HepG2 (cell line): ENCODE measurements at regions of chr7 and their contacts with region 1.

Region 1: GRCh38 chr7:33185786-33186185 is 56.4 kb downstream of the BBS9 start:
- DNase-seq: peak; percentile 62
- ATAC-seq: peak; percentile 85
- H3K4me3 ChIP-seq: no peak overlapping the region
- H3K27ac ChIP-seq: no peak overlapping the region
- H3K4me1 ChIP-seq: peaks cover 7% of the 10 kb centered on the region
- H3K27me3 ChIP-seq: no peaks in the 10 kb centered on the region; a peak in 1 of 5 replicates
- CTCF ChIP-seq: peak; percentile 84
- EP300 ChIP-seq: no peak
- POLR2A ChIP-seq: no peak
- RAD21 ChIP-seq: peak; percentile 76

Region 2: GRCh38 chr7:33334349-33334748 is 148.6 kb after region 1 on chr7:
- CTCF ChIA-PET with region 1: no interaction called
- POLR2A ChIA-PET with region 1: no interaction called
- in situ Hi-C with region 1: no loop called
- intact Hi-C with region 1: loop called (anchors 5 kb)
- DNase-seq: peak; percentile 6
- ATAC-seq: peak; percentile 63
- H3K4me3 ChIP-seq: no peak overlapping the region
- H3K27ac ChIP-seq: no peak overlapping the region
- H3K4me1 ChIP-seq: no peaks in the 10 kb centered on the region
- H3K27me3 ChIP-seq: no peaks in the 10 kb centered on the region
- CTCF ChIP-seq: peak; percentile 71
- EP300 ChIP-seq: no peak
- POLR2A ChIP-seq: no peak
- RAD21 ChIP-seq: no peak

Region 3: GRCh38 chr7:33459340-33459751 is 273.6 kb after region 1 on chr7:
- CTCF ChIA-PET with region 1: no interaction called
- POLR2A ChIA-PET with region 1: no interaction called
- in situ Hi-C with region 1: loop called (anchors 10 kb)
- intact Hi-C with region 1: loop called (anchors 1 kb)
- DNase-seq: peak; percentile 41
- ATAC-seq: peak; percentile 99
- H3K4me3 ChIP-seq: no peak overlapping the region
- H3K27ac ChIP-seq: no peak overlapping the region
- H3K4me1 ChIP-seq: peaks cover 10% of the 10 kb centered on the region; the same call in 1 of the 2 replicates
- H3K27me3 ChIP-seq: no peaks in the 10 kb centered on the region
- CTCF ChIP-seq: peak; percentile 52
- EP300 ChIP-seq: no peak
- POLR2A ChIP-seq: no peak
- RAD21 ChIP-seq: no peak

Region 4: GRCh38 chr7:33716581-33717477 is 531.0 kb after region 1 on chr7:
- CTCF ChIA-PET with region 1: no interaction called
- POLR2A ChIA-PET with region 1: no interaction called
- in situ Hi-C with region 1: loop called (anchors 25 kb)
- intact Hi-C with region 1: no loop called
- DNase-seq: peak; percentile 33
- ATAC-seq: peak; percentile 41; the same call in 1 of the 3 replicates
- H3K4me3 ChIP-seq: no peak overlapping the region
- H3K27ac ChIP-seq: no peak overlapping the region
- H3K4me1 ChIP-seq: peaks cover 29% of the 10 kb centered on the region
- H3K27me3 ChIP-seq: no peaks in the 10 kb centered on the region
- CTCF ChIP-seq: peak; percentile 63
- EP300 ChIP-seq: no peak
- POLR2A ChIP-seq: no peak
- RAD21 ChIP-seq: no peak

Region 5: DNA sequence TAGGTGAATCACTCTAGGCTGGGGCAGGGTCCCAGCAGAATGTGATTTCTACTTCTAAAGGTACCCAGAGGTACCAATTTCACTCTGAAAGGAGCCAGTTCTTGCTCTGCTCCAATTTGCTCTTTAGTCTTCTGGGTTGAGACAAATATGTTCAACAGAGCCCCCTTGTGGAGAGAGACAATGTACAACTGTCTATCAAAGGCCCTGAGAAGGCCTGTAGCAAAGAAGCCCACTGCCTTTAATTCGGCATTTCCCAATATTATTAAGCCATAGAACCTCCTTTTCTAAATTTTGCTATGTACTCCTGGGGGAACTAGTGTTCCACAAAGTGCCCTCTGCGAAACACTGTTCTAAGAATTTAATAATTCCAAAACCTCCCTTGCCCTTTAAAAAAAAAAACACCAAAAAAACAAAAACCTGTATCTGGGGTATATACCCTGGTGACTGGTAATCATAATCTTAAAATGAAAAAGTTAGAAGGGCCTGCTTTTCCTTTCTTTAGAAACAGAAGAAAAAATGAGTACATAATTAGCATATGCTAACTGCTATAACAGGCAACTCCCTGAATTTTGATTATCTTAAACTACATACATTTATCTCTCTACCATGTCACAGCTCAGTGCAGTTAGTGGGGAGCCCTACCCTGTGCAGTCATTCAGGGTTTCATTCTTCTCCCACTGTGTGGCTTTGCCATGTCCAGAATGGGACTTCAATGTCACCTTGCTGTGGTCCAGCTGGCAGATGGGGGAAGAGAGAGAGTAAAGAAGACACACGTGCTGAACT is 558.7 kb after region 1 on chr7:
- CTCF ChIA-PET with region 1: interaction called, 9 read pairs
- POLR2A ChIA-PET with region 1: no interaction called
- in situ Hi-C with region 1: no loop called
- intact Hi-C with region 1: loop called (anchors 2 kb)
- DNase-seq: peak; percentile 58
- ATAC-seq: peak; percentile 75
- H3K4me3 ChIP-seq: no peak overlapping the region
- H3K27ac ChIP-seq: no peak overlapping the region
- H3K4me1 ChIP-seq: peaks cover 10% of the 10 kb centered on the region
- H3K27me3 ChIP-seq: no peaks in the 10 kb centered on the region
- CTCF ChIP-seq: peak; percentile 58
- EP300 ChIP-seq: no peak
- POLR2A ChIP-seq: no peak
- RAD21 ChIP-seq: peak; percentile 22; the same call in 1 of the 2 replicates

Region 6: DNA sequence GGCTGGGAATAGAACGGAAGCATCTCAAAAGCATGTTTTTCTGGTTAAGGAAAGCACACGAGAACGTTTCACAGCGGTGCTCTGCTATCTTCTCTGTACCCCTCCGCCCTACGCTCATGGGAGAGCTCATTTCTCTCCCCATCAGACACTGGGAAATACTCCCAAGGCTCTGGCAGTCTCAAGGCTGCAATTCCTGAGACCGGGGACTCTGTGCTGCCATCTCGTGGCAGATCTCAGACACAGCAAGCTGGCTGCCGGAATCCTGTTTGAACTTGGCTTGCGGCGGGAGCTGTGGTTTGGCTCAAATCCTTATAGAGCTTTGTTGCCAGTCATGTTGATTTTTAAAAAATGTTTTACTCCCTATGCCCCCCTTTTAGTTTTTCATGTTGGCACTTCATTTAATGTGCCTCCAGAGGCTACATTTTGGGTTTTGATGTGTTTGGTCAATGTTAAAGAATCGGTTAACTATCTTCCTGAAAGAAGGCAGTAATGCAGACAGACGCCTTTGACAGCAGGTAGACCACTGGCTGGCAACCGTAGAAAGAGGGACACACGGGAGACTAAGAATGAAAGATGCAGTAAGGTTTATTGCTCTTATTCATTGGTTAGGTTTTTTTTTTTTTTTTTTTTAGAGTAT is 747.2 kb after region 1 on chr7:
- CTCF ChIA-PET with region 1: no interaction called
- POLR2A ChIA-PET with region 1: no interaction called
- in situ Hi-C with region 1: no loop called
- intact Hi-C with region 1: loop called (anchors 1 kb)
- DNase-seq: peak; percentile 35
- ATAC-seq: peak; percentile 82
- H3K4me3 ChIP-seq: no peak overlapping the region
- H3K27ac ChIP-seq: no peak overlapping the region
- H3K4me1 ChIP-seq: no peaks in the 10 kb centered on the region
- H3K27me3 ChIP-seq: peaks cover 0 to 13% of the 10 kb centered on the region in 2 experiments; a peak in 1 of 5 replicates
- CTCF ChIP-seq: peak; percentile 88
- EP300 ChIP-seq: no peak
- POLR2A ChIP-seq: no peak
- RAD21 ChIP-seq: peak; percentile 68